ENCODE measurements at regions of chr4 and their contacts with region 1.

Region 1: DNA sequence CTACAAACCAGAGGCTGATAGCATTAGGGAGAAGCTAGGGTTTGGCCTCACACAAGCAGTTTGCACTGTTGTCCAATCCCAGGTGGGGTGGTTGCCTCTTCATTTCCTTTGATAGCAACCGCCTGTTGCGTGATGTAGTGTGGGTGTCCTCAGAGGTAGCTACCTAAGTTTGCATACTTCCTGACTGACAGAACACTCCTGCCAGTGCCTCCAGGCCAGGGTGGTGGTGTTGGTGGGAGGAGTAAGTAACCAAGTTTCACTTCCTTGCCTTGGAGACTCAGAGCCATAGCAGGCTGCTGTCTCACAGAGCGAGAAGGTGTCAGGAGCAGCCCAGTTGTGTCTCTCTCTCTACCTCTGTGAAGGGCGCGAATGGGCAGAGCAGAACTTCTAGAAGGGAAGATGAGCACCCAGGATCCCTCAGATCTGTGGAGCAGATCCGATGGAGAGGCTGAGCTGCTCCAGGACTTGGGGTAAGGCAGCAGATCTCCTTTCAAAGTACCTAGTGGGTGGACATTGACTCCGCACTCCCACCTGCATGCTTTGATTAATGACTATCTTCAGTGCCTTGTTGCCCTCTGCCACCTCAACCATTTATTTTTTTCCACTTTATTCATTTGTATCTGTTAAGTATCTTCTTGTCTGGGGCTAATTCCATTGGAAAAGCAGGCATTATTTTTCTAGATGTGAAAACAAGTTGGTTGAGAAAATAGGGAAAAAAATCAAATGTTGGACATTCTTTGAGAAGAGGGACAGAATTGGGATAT is at the start of gene DAPP1:
- DNase-seq: peak; percentile 89
- H3K4me3 Mint-ChIP-seq: peak within 1 kb of the TSS; percentile 81
- H3K27ac Mint-ChIP-seq: peak within 1 kb of the TSS; percentile 93
- H3K4me1 Mint-ChIP-seq: peaks cover 64% of the 10 kb centered on the region
- H3K27me3 Mint-ChIP-seq: no peaks in the 10 kb centered on the region
- total RNA-seq, gene DAPP1: 23.6 TPM

Region 2: GRCh38 chr4:99847362-99847976 is 30.7 kb after region 1 on chr4:
- CTCF ChIA-PET with region 1: interaction called, 10 read pairs
- POLR2A ChIA-PET with region 1: interaction called, 29 read pairs
- intact Hi-C with region 1: loop called (anchors 1 kb)
- DNase-seq: peak; percentile 47
- H3K4me3 Mint-ChIP-seq: peak overlapping the region; percentile 59
- H3K27ac Mint-ChIP-seq: peak overlapping the region; percentile 95
- H3K4me1 Mint-ChIP-seq: peaks cover 74% of the 10 kb centered on the region
- H3K27me3 Mint-ChIP-seq: no peaks in the 10 kb centered on the region

Region 3: GRCh38 chr4:99855678-99856077 is 39.0 kb after region 1 on chr4:
- CTCF ChIA-PET with region 1: interaction called, 11 read pairs
- POLR2A ChIA-PET with region 1: interaction called, 9 read pairs
- intact Hi-C with region 1: loop called (anchors 1 kb)
- DNase-seq: peak; percentile 37
- H3K4me3 Mint-ChIP-seq: no peak overlapping the region
- H3K27ac Mint-ChIP-seq: peak overlapping the region; percentile 7
- H3K4me1 Mint-ChIP-seq: peaks cover 70% of the 10 kb centered on the region
- H3K27me3 Mint-ChIP-seq: no peaks in the 10 kb centered on the region

Region 4: DNA sequence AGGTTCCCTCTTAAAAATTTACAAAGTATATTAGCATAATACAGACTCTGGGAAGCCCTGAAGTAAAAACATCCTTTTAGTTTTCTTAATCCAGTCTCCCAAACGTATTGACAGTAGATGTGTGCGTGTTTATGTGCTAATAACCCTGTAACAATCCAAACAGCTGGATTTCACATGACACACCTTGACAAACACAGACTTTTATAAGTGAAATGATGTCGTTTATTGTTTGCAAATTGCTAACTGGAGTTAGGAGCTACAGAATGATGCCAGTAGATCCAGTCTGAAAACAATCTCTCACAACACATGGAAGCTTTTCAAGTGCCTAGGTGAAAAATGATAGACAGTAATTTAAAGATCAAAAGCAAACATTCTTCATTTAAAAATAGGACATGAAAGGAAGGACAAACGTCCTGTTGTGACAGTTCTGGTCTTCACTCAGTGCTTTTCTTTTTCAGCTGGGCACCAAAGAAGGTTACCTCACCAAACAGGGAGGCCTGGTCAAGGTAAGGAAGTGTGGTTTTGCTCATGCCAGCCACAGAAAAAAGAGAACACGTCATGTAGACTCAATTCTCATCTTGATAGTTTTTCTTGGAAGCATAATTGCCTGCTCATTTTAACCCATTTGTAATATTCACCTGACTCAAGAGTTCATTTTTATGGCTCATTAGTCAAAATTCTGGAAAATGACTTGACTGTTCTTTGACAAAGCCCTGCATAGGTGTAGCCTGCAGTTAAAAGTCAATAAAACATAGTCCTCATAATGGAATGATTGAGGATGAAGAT is 44.6 kb after region 1 on chr4:
- CTCF ChIA-PET with region 1: interaction called, 11 read pairs
- POLR2A ChIA-PET with region 1: interaction called, 4 read pairs
- intact Hi-C with region 1: loop called (anchors 1 kb)
- DNase-seq: peak; percentile 60
- H3K4me3 Mint-ChIP-seq: no peak overlapping the region
- H3K27ac Mint-ChIP-seq: peak overlapping the region; percentile 81
- H3K4me1 Mint-ChIP-seq: peaks cover 40% of the 10 kb centered on the region
- H3K27me3 Mint-ChIP-seq: no peaks in the 10 kb centered on the region

Region 5: GRCh38 chr4:99885063-99885664 is 68.4 kb after region 1 on chr4:
- CTCF ChIA-PET with region 1: interaction called, 73 read pairs
- POLR2A ChIA-PET with region 1: interaction called, 4 read pairs
- intact Hi-C with region 1: loop called (anchors 1 kb)
- DNase-seq: peak; percentile 19
- H3K4me3 Mint-ChIP-seq: no peak overlapping the region
- H3K27ac Mint-ChIP-seq: no peak overlapping the region
- H3K4me1 Mint-ChIP-seq: peaks cover 6% of the 10 kb centered on the region
- H3K27me3 Mint-ChIP-seq: no peaks in the 10 kb centered on the region

Region 6: DNA sequence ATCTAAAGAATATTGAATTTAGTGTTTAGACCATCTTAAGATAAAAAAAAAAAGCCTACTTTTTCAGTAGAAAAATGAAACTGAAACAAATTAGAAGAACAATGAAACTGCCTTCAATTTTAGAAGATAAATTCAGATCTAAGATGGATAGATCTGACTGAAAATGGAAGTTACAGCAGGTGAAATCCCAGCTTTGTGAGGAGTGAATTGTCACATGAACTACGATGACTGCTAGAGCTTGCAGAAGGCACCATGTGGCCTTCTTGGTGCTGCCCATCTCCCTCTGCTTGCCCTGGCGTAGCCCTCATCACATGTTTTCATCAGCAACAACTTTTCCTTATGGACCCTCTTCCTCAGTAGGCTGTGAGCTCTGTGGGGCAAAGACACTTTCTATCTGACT is 752.5 kb after region 1 on chr4:
- CTCF ChIA-PET with region 1: no interaction called
- POLR2A ChIA-PET with region 1: no interaction called
- intact Hi-C with region 1: loop called (anchors 5 kb)
- DNase-seq: peak; percentile 12
- H3K4me3 Mint-ChIP-seq: no peak overlapping the region
- H3K27ac Mint-ChIP-seq: no peak overlapping the region
- H3K4me1 Mint-ChIP-seq: peaks cover 24% of the 10 kb centered on the region
- H3K27me3 Mint-ChIP-seq: no peaks in the 10 kb centered on the region

Measured in activated CD4-positive, alpha-beta memory T cell treated with anti-CD3 and anti-CD28 coated beads for 36 hours (primary cell).